Activated CD4-positive, alpha-beta memory T cell treated with anti-CD3 and anti-CD28 coated beads for 36 hours (primary cell): ENCODE measurements at regions of chr12 and their contacts with region 1.

Region 1: GRCh38 chr12:57846577-57847319 is at the start of gene CTDSP2:
- DNase-seq: peak; percentile 94
- H3K4me3 Mint-ChIP-seq: peak within 1 kb of the TSS; percentile 82
- H3K27ac Mint-ChIP-seq: peak within 1 kb of the TSS; percentile 78
- H3K4me1 Mint-ChIP-seq: peaks cover 37% of the 10 kb centered on the region
- H3K27me3 Mint-ChIP-seq: peaks cover 7% of the 10 kb centered on the region
- total RNA-seq, gene CTDSP2: 100 to 101 TPM

Region 2: GRCh38 chr12:57332646-57333312 is 514.0 kb before region 1 on chr12:
- CTCF ChIA-PET with region 1: no interaction called
- POLR2A ChIA-PET with region 1: no interaction called
- intact Hi-C with region 1: no loop called
- DNase-seq: no peak
- H3K4me3 Mint-ChIP-seq: no peak overlapping the region
- H3K27ac Mint-ChIP-seq: no peak overlapping the region
- H3K4me1 Mint-ChIP-seq: no peaks in the 10 kb centered on the region
- H3K27me3 Mint-ChIP-seq: no peaks in the 10 kb centered on the region

Region 3: DNA sequence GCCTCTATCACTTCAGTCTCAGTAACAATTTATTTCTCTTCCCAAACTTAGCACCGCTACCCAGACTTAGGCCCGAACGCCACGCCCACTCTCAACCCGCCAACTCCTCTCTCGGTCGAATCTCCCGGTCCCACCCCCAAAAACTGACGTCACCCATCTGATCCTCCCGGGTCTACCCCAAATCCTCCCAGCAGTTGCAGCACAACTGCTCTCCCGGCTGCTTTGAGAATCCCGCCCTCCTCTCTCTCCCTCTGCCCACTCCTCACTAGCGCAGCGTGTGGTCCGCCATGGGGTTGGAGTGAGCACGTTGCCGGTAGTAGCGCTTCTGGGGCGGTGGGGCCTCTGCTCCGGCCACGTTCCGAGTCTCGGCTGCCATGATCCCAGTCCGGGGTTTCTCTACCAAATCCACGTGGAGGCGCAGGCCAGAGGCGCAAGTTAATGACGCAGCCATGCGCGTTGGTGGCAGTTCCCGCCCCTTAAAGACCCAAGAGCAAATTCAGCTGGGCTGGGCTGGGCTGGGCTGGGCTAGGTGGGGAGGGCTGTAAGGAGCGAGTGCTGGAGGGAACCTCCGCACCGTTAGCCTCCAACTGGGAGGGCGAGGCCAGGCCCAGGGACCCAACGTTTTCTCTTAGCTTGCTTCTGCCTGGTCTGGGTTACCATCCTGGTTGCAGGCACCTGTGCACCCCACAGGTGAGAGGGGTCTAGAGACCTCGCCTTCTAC is 74.9 kb before region 1 on chr12 and contains the start of gene METTL1:
- CTCF ChIA-PET with region 1: no interaction called
- POLR2A ChIA-PET with region 1: interaction called, 5 read pairs
- intact Hi-C with region 1: loop called (anchors 2 kb)
- DNase-seq: peak; percentile 97
- H3K4me3 Mint-ChIP-seq: peak within 1 kb of the TSS; percentile 99
- H3K27ac Mint-ChIP-seq: peak within 1 kb of the TSS; percentile 97
- H3K4me1 Mint-ChIP-seq: peaks cover 24% of the 10 kb centered on the region
- H3K27me3 Mint-ChIP-seq: no peaks in the 10 kb centered on the region
- total RNA-seq, gene METTL1: 30.0 to 32.0 TPM

Region 4: GRCh38 chr12:57829025-57829777 is 17.5 kb before region 1 on chr12:
- CTCF ChIA-PET with region 1: interaction called, 22 read pairs
- POLR2A ChIA-PET with region 1: interaction called, 5 read pairs
- intact Hi-C with region 1: loop called (anchors 2 kb)
- DNase-seq: no peak
- H3K4me3 Mint-ChIP-seq: no peak overlapping the region
- H3K27ac Mint-ChIP-seq: peak overlapping the region; percentile 42
- H3K4me1 Mint-ChIP-seq: peaks cover 40% of the 10 kb centered on the region
- H3K27me3 Mint-ChIP-seq: no peaks in the 10 kb centered on the region

Region 5: DNA sequence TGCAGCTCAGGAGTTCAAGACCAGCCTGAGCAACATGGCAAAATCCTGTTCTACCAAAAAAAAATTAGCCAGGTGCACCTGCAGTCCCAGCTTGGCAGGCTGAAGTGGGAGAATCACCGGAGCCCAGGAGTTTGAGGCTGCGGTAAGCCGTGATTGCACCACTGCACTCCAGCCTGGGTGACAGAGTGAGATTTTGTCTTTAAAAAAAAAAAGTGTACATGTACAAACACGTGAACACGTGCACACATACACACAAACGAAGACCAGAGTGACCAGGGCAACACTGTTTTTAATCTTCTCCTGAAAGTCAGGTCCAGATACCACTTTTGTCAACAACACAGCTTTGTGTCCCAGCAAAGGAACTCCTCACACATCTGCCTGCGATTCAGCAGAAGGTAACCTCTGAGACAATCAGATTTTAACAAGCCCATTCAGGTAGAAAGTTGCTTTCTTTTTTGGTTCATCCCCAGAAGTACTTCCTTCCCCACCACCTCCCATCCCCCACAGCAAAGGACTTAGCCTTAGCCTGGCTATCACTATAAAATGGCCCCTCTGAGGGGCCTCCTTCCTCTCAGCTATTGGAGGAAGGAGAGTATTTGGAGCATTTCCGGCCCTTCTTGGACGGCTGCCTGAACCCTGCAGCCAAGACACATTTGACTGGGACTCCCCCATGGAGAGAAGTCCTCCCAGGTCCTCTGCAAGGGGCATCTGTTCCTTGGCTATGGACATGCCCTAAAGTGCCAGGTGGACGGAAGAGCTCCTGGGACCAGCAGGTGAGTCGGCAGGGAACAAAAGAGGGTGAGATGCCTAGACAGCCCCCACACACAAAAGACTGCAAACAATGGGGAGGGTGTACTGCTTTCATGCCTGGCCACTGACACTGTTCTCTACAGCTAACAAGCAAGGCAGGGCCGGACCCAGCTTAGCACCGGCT is 10.0 kb before region 1 on chr12:
- CTCF ChIA-PET with region 1: interaction called, 22 read pairs
- POLR2A ChIA-PET with region 1: interaction called, 19 read pairs
- intact Hi-C with region 1: loop called (anchors 1 kb)
- DNase-seq: peak; percentile 72
- H3K4me3 Mint-ChIP-seq: peak overlapping the region; percentile 48
- H3K27ac Mint-ChIP-seq: peak overlapping the region; percentile 86
- H3K4me1 Mint-ChIP-seq: peaks cover 93% of the 10 kb centered on the region
- H3K27me3 Mint-ChIP-seq: no peaks in the 10 kb centered on the region

Region 6: GRCh38 chr12:57865090-57865751 is 18.5 kb after region 1 on chr12:
- CTCF ChIA-PET with region 1: interaction called, 8 read pairs
- POLR2A ChIA-PET with region 1: no interaction called
- intact Hi-C with region 1: loop called (anchors 2 kb)
- DNase-seq: peak; percentile 83
- H3K4me3 Mint-ChIP-seq: peak overlapping the region; percentile 59
- H3K27ac Mint-ChIP-seq: no peak overlapping the region
- H3K4me1 Mint-ChIP-seq: peaks cover 4% of the 10 kb centered on the region
- H3K27me3 Mint-ChIP-seq: no peaks in the 10 kb centered on the region

Region 7: GRCh38 chr12:57904848-57905811 is 58.4 kb after region 1 on chr12:
- CTCF ChIA-PET with region 1: interaction called, 32 read pairs
- POLR2A ChIA-PET with region 1: no interaction called
- intact Hi-C with region 1: no loop called
- DNase-seq: peak; percentile 91
- H3K4me3 Mint-ChIP-seq: peak overlapping the region; percentile 52
- H3K27ac Mint-ChIP-seq: peak overlapping the region; percentile 10
- H3K4me1 Mint-ChIP-seq: peaks cover 7% of the 10 kb centered on the region
- H3K27me3 Mint-ChIP-seq: peaks cover 14% of the 10 kb centered on the region